Naive thymus-derived CD4-positive, alpha-beta T cell (primary cell): ENCODE measurements at regions of chr6 and their contacts with region 1.

Region 1: DNA sequence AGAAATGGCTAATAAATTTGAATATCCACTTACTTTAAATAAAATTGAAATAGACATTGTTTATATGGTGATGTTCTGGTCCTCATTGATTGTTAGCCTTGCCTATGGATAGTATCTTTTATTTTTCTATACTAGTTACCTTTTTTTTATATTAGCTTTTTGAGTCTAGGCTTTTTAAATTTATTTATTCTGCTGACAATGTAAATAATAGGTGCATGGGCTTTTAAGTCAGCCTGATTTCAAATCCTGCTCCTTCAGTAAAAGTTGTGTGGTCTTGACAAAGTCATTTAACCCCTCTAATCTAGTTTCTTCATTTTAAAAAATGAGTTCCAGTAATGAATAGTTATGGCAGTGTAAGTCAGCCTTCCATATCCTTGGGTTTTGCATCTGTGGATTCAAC is 38.6 kb downstream of the FAM162B start:
- DNase-seq: no peak
- ATAC-seq: no peak
- H3K4me3 ChIP-seq: no peak overlapping the region
- H3K4me3 Mint-ChIP-seq: no peak overlapping the region
- H3K27ac ChIP-seq: no peak overlapping the region
- H3K27ac Mint-ChIP-seq: peak overlapping the region in 1 of 9 donors; percentile 58
- H3K4me1 ChIP-seq: no peaks in the 10 kb centered on the region
- H3K4me1 Mint-ChIP-seq: peaks cover 0 to 2% (median 0%) of the 10 kb centered on the region in 7 donors
- H3K27me3 ChIP-seq: no peaks in the 10 kb centered on the region
- H3K27me3 Mint-ChIP-seq: no peaks in the 10 kb centered on the region

Region 2: GRCh38 chr6:116714761-116715160 is 12.2 kb before region 1 on chr6:
- CTCF ChIA-PET with region 1: interaction called, 3 read pairs
- POLR2A ChIA-PET with region 1: no interaction called
- intact Hi-C with region 1: loop called in 1 of 2 experiments (anchors 2 kb)
- DNase-seq: no peak
- ATAC-seq: no peak
- H3K4me3 ChIP-seq: no peak overlapping the region
- H3K4me3 Mint-ChIP-seq: no peak overlapping the region
- H3K27ac ChIP-seq: no peak overlapping the region
- H3K27ac Mint-ChIP-seq: no peak overlapping the region
- H3K4me1 ChIP-seq: no peaks in the 10 kb centered on the region
- H3K4me1 Mint-ChIP-seq: peaks cover 3 to 22% (median 14%) of the 10 kb centered on the region in 7 donors
- H3K27me3 ChIP-seq: no peaks in the 10 kb centered on the region
- H3K27me3 Mint-ChIP-seq: no peaks in the 10 kb centered on the region

Region 3: DNA sequence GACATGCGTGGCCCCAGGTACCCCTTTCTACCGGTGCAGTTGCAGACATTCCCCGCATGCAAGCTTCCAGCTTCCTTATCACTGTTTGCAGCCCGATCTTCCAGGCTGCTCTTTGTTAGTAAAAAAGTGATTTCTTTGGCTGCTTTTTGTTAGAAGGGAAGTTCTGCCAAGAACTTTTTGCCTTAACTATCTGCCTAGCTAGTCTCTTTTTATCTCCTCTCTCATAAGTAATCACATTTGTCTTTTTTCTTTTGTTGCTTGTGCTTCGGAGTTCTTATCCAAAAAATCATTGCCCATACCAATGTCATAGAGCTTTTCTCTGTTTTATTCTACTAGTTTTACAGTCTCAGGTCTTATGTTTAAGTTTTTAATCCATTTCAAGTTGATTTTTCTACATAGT is 18.2 kb after region 1 on chr6:
- CTCF ChIA-PET with region 1: no interaction called
- POLR2A ChIA-PET with region 1: no interaction called
- intact Hi-C with region 1: no loop called
- DNase-seq: no peak
- ATAC-seq: no peak
- H3K4me3 ChIP-seq: no peak overlapping the region
- H3K4me3 Mint-ChIP-seq: no peak overlapping the region
- H3K27ac ChIP-seq: no peak overlapping the region
- H3K27ac Mint-ChIP-seq: no peak overlapping the region
- H3K4me1 ChIP-seq: no peaks in the 10 kb centered on the region
- H3K4me1 Mint-ChIP-seq: no peaks in the 10 kb centered on the region
- H3K27me3 ChIP-seq: peaks cover 0 to 3% of the 10 kb centered on the region in 2 donors
- H3K27me3 Mint-ChIP-seq: peaks cover 5 to 13% (median 9%) of the 10 kb centered on the region in 5 donors